PC-9 (cell line): ENCODE measurements at regions of chr1 and their contacts with region 1.

Region 1: DNA sequence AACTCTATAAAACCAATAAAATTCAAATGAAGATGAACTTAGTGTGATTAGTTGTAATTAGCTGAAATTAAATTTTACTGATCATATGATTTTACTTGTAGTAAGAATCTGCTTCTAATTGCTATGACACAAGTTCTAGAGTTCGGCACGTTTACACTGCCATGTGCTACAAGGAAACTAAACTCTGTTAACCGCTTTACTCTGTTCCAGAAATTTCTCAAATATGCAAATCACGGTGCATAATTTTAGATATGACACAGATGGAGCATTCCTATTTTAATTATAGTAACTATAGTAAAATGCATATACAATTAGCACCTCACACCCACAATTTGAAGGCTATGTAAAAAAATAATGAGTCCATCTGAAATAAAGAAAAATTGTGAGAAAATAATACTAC is 14.8 kb downstream of the HEATR1 start:
- DNase-seq: no peak
- H3K4me3 ChIP-seq: no peak overlapping the region
- H3K27ac ChIP-seq: no peak overlapping the region
- H3K4me1 ChIP-seq: no peaks in the 10 kb centered on the region
- H3K27me3 ChIP-seq: no peaks in the 10 kb centered on the region
- CTCF ChIP-seq: no peak

Region 2: DNA sequence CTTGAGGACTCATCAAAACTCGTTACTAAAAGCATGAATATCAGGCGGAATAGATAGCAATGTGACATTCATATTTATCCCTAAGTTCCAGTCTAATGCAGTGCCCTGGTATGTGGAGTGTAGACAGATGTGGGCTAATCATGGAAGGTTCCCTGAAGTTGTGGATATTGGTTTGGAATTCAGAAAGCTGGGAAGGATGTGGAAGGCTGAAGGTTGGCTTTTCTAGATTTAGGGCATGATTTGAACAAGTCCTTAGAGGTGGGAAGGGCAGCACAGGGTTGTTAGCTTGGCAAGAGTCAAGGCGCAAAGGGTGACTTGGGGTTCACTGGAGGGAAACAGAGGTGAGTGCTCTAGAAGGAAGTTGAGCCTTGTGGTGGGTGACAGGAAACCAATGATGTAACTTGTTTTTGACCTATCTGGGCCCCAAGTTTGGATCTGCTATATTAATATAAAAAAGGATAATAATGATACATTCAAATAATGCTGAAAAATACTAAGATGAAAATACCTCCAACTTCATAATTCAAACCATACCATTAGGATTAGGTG is 43.8 kb before region 1 on chr1:
- CTCF ChIA-PET with region 1: no interaction called
- POLR2A ChIA-PET with region 1: no interaction called
- intact Hi-C with region 1: loop called (anchors 5 kb)
- DNase-seq: no peak
- H3K4me3 ChIP-seq: no peak overlapping the region
- H3K27ac ChIP-seq: no peak overlapping the region
- H3K4me1 ChIP-seq: no peaks in the 10 kb centered on the region
- H3K27me3 ChIP-seq: no peaks in the 10 kb centered on the region
- CTCF ChIP-seq: no peak